ENCODE measurements at regions of chr1 and their contacts with region 1.

Region 1: GRCh38 chr1:200802865-200803512 is 64.3 kb downstream of the CAMSAP2 start:
- ATAC-seq: peak; percentile 76 to 92 (median 88)
- H3K4me3 ChIP-seq: no peak overlapping the region
- H3K27ac ChIP-seq: no peak overlapping the region
- H3K4me1 ChIP-seq: no peaks in the 10 kb centered on the region

Region 2: GRCh38 chr1:200620273-200621131 is 182.5 kb before region 1 on chr1 and contains the start of gene KIF14:
- in situ Hi-C with region 1: loop called in 3 of 9 experiments (anchors 25 kb)
- ATAC-seq: peak; percentile 96 to 100 (median 99)
- H3K4me3 ChIP-seq: peak within 1 kb of the TSS; percentile 49 to 70 (median 55)
- H3K27ac ChIP-seq: no peak within 1 kb of the TSS
- H3K4me1 ChIP-seq: peaks cover under 1 to 8% of the 10 kb centered on the region in 2 donors
- total RNA-seq, gene KIF14: 0.15 to 15.9 (median 1.1) TPM

Region 3: GRCh38 chr1:200877839-200878551 is 75.0 kb after region 1 on chr1:
- in situ Hi-C with region 1: no loop called
- ATAC-seq: no peak
- H3K4me3 ChIP-seq: no peak overlapping the region
- H3K27ac ChIP-seq: no peak overlapping the region
- H3K4me1 ChIP-seq: peaks cover 2 to 11% of the 10 kb centered on the region in 2 donors

Measured in motor neuron (in vitro differentiated cells).